Psoas muscle (tissue), 8 donors: ENCODE measurements at regions of chr15 and their contacts with region 1.

Region 1: DNA sequence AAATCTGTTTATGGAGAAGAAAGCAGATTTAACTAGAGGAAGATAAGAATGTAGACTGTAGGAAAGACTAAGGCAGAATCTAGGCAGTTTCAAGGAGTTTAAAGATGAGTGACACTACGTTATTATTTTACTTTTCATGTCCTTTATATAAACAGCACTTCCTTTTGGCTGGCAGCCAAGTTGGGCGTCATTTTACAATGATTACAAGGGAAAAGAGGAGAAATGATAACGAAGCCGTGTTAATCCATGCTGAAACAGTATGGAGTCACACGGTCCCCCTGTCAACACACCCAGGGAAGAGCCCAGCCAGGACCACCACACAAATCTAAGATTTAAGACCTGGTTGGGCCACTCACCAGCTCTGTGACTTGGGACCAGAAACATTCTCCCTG is 83.7 kb upstream of the NEO1 start:
- DNase-seq: peak in 1 of 2 donors; percentile 49
- ATAC-seq: no peak
- H3K4me3 ChIP-seq: no peak overlapping the region
- H3K27ac ChIP-seq: peak overlapping the region; percentile 57
- H3K4me1 ChIP-seq: peaks cover 51% of the 10 kb centered on the region
- H3K27me3 ChIP-seq: no peaks in the 10 kb centered on the region
- CTCF ChIP-seq: no peak

Region 2: GRCh38 chr15:72155635-72156616 is 812.6 kb before region 1 on chr15:
- intact Hi-C with region 1: no loop called
- DNase-seq: peak; percentile 84 to 90
- ATAC-seq: peak; percentile 89 to 97 (median 92)
- H3K4me3 ChIP-seq: peak overlapping the region; percentile 68
- H3K27ac ChIP-seq: no peak overlapping the region
- H3K4me1 ChIP-seq: peaks cover 6% of the 10 kb centered on the region
- H3K27me3 ChIP-seq: no peaks in the 10 kb centered on the region
- CTCF ChIP-seq: peak; percentile 83

Region 3: GRCh38 chr15:72796515-72797337 is 171.8 kb before region 1 on chr15:
- intact Hi-C with region 1: loop called in 1 of 2 experiments (anchors 5 kb)
- DNase-seq: peak; percentile 78
- ATAC-seq: peak; percentile 92 to 98 (median 95)
- H3K4me3 ChIP-seq: peak overlapping the region; percentile 81
- H3K27ac ChIP-seq: peak overlapping the region; percentile 78
- H3K4me1 ChIP-seq: peaks cover 3% of the 10 kb centered on the region
- H3K27me3 ChIP-seq: no peaks in the 10 kb centered on the region
- CTCF ChIP-seq: peak; percentile 79

Region 4: GRCh38 chr15:72827226-72827625 is 141.3 kb before region 1 on chr15:
- intact Hi-C with region 1: no loop called
- DNase-seq: peak in 1 of 2 donors; percentile 28
- ATAC-seq: peak; percentile 88 to 94 (median 92)
- H3K4me3 ChIP-seq: no peak overlapping the region
- H3K27ac ChIP-seq: peak overlapping the region; percentile 58
- H3K4me1 ChIP-seq: no peaks in the 10 kb centered on the region
- H3K27me3 ChIP-seq: no peaks in the 10 kb centered on the region
- CTCF ChIP-seq: no peak

Region 5: DNA sequence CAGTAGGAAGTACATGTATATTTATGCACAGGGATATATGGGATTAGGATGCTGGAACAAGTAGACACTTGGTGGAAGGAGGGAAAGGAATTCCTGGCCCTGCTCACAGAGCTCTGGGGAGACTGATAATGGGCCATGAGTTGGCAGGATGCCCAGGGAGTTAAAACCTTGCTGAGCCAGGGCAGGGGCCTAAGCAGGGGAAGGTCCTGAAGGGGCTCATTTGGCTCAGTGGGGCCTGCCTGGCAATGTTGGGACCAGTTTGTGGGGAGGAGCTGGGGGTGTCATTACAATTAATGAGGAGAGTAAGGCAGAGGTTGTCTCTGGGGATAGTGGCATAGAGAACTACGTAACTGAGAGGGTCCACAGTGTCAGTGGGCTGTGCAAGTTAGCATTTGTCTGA is 60.8 kb before region 1 on chr15:
- intact Hi-C with region 1: no loop called
- DNase-seq: no peak
- ATAC-seq: no peak
- H3K4me3 ChIP-seq: no peak overlapping the region
- H3K27ac ChIP-seq: no peak overlapping the region
- H3K4me1 ChIP-seq: peaks cover 5% of the 10 kb centered on the region
- H3K27me3 ChIP-seq: no peaks in the 10 kb centered on the region
- CTCF ChIP-seq: no peak

Region 6: DNA sequence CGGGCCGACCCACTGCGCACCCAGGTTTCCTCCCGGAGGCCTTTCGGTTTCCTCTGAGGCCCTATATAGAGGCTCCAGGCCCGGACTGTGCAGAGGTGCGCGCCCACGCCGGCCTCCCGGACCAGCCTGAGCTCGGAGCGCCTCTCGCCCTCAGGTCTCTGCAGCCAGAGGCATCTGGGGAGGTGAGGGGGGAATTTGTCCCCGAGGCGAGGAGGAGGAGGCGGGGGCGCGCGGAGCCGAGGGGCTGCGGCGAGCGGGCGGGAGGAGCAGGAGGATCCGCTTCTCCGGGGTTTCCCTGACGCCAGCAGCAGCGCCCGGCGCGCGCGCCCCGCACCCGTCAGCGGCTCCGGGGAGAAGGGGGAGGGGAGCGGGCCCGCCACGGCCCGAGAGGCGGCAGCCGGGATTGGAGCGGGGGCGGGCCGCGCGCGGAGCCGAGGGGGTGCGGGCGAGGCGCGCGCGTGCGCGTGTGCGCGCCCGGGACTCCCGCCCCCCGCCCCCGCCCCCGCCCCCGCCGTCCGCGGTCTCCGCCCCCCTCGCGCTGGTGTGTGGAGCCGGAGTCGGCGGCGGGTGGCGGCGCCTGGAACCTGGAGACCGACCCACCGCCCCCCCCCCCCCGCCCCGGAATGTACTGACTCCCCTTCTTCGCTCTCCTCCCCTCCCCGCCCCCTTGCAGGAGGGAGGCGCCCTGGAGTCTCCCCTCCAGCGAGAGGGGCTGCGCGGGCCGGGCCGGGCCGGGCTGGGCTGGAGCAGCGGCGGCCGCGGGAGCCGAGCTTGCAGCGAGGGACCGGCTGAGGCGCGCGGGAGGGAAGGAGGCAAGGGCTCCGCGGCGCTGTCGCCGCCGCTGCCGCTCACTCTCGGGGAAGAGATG is 83.5 kb after region 1 on chr15 and contains the start of gene NEO1:
- intact Hi-C with region 1: loop called in 1 of 2 experiments (anchors 5 kb)
- DNase-seq: peak; percentile 89 to 95
- ATAC-seq: peak; percentile 91 to 95 (median 94)
- H3K4me3 ChIP-seq: peak within 1 kb of the TSS; percentile 79
- H3K27ac ChIP-seq: peak within 1 kb of the TSS; percentile 90
- H3K4me1 ChIP-seq: peaks cover 52% of the 10 kb centered on the region
- H3K27me3 ChIP-seq: no peaks in the 10 kb centered on the region
- CTCF ChIP-seq: no peak
- total RNA-seq, gene NEO1: 22.5 to 33.3 (median 26.0) TPM